PC-9 (cell line): ENCODE measurements at regions of chr2 and their contacts with region 1.

Region 1: DNA sequence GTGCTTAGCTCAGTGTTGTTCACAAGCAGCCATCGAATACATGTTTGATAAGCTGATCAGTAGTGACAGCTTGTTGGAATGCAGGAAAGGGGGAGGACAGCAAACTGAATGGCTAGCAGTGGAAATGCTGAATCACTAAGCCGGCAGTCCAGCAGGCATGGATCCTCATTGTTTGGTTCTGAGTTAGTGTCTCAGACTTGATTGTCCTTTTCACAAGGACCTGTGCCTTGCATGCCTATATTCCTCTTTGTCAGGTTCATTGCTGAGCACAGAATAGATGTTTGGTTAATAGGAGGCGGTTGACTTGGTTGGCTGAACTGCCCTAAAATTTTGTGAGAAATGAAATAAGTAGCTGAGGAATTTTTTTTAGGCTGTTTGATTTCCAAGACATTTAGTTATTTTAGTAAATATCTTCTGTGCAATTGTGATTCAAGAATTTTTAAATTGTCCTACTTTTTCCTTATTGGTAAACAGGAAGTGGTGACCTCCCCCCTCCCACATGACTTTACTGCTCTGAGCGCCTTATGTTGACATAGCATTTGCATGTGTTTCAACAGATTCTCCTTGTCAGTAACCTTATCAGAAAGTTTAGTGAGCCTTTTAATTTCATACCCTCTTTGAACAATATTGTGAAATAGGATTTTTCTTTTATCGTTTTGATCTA is 21.4 kb upstream of the STON1 start:
- DNase-seq: no peak
- H3K4me3 ChIP-seq: no peak overlapping the region
- H3K27ac ChIP-seq: peak overlapping the region; percentile 14; the same call in 1 of the 2 replicates
- H3K4me1 ChIP-seq: peaks cover 9% of the 10 kb centered on the region; the same call in 1 of the 2 replicates
- H3K27me3 ChIP-seq: no peaks in the 10 kb centered on the region
- CTCF ChIP-seq: no peak

Region 2: GRCh38 chr2:46979571-46979979 is 1529.0 kb before region 1 on chr2:
- CTCF ChIA-PET with region 1: no interaction called
- POLR2A ChIA-PET with region 1: no interaction called
- intact Hi-C with region 1: no loop called
- DNase-seq: no peak
- H3K4me3 ChIP-seq: no peak overlapping the region
- H3K27ac ChIP-seq: no peak overlapping the region
- H3K4me1 ChIP-seq: peaks cover 35% of the 10 kb centered on the region
- H3K27me3 ChIP-seq: no peaks in the 10 kb centered on the region
- CTCF ChIP-seq: no peak

Region 3: GRCh38 chr2:48369971-48370370 is 138.6 kb before region 1 on chr2:
- CTCF ChIA-PET with region 1: no interaction called
- POLR2A ChIA-PET with region 1: interaction called, 18 read pairs
- intact Hi-C with region 1: no loop called
- DNase-seq: no peak
- H3K4me3 ChIP-seq: no peak overlapping the region
- H3K27ac ChIP-seq: no peak overlapping the region
- H3K4me1 ChIP-seq: no peaks in the 10 kb centered on the region
- H3K27me3 ChIP-seq: no peaks in the 10 kb centered on the region
- CTCF ChIP-seq: no peak

Region 4: DNA sequence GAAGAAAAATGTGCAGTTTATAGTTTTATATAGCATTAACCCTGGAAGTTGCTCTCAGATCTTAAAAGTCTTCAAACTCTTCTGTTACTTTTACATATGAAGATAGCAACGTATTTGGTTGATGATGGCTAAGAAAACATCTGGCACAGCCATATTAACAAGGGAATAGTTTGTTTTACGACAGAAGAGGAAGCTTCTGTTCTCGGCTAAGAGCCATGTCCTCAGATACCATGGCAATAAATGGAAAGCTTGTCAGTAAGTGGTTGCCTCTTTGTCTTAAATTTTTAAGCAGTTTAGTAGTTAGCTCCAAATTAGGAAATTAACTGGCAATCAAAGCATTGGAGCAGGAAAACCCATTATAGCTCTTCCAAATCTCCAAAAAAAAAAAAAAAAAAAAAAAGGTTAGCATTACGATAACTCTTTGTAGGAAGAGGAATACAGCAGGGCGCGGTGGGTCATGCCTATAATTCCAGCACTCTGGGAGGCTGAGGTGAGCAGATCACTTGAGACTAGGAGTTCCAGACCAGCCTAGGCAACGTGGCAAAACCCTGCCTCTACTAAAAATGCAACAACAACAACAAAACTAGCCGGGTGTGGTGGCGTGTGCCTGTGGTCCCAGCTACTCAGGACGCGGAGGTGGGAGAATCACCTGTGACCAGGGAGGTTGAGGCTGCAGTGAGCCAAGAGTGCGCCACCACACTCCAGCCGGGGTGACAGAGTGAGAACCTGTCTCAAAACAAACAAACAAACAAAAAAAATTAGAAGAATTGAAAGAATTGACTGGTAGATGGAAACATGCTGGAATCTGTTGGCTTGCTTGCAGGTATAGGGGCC is 16.9 kb after region 1 on chr2:
- CTCF ChIA-PET with region 1: interaction called, 16 read pairs
- POLR2A ChIA-PET with region 1: interaction called, 3 read pairs
- intact Hi-C with region 1: no loop called
- DNase-seq: no peak
- H3K4me3 ChIP-seq: no peak overlapping the region
- H3K27ac ChIP-seq: no peak overlapping the region
- H3K4me1 ChIP-seq: no peaks in the 10 kb centered on the region
- H3K27me3 ChIP-seq: no peaks in the 10 kb centered on the region
- CTCF ChIP-seq: no peak